ENCODE measurements at regions of chr4 and their contacts with region 1.

Region 1: GRCh38 chr4:7042697-7043464 is at the start of gene TADA2B:
- DNase-seq: peak; percentile 89 to 92 (median 91)
- H3K4me3 ChIP-seq: peak within 1 kb of the TSS; percentile 59 to 86 (median 76)
- H3K27ac ChIP-seq: peak within 1 kb of the TSS in 1 of 2 experiments; percentile 45
- H3K4me1 ChIP-seq: peaks cover 3 to 28% (median 26%) of the 10 kb centered on the region in 4 experiments
- H3K27me3 ChIP-seq: peaks cover 0 to 84% (median 46%) of the 10 kb centered on the region in 5 experiments

Region 2: DNA sequence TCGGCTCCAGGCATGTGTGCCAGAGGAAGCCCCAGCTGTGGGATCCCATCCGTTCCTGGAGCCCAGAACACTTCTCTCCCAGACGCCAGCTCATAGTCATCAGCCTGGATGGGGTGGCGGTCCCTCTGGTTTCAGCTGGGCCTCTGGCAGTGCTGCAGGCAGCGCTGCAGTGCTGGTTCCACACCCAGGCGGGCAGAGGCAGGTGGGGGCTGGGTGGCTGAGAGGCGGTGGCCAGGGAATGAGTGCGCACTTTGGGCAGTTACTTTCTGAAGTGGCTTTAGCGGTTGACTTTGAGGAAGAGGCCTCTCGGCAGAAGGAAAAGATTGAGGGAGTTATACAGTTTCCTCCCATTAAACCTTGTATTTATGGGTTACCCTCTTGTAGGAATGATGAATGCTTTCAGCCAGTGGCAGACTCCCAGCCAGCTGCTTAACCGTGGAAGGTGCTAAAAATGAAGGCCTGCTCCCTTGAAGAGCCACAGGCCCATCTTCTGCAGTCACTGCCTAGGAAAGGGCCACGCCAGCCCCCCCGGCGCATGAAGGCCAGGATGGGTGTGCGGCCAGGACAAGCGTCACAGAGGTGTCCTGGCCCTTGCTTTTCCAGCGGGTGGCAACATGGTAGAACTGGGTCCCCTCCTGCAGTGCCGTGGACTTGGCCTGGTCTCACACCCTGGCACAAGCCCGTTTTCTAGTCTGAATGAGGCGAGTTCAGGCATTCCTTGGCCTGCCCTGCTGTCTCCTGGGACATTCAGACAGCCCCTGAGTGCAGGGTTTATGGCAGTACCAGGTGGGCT is 10.2 kb after region 1 on chr4:
- CTCF ChIA-PET with region 1: interaction called, 23 read pairs
- POLR2A ChIA-PET with region 1: no interaction called
- DNase-seq: peak; percentile 80 to 93 (median 93)
- H3K4me3 ChIP-seq: peak overlapping the region in 4 of 7 experiments; percentile 1 to 16 (median 10)
- H3K27ac ChIP-seq: no peak overlapping the region
- H3K4me1 ChIP-seq: peaks cover 0 to 25% (median 17%) of the 10 kb centered on the region in 4 experiments
- H3K27me3 ChIP-seq: peaks cover 0 to 84% (median 28%) of the 10 kb centered on the region in 5 experiments

Region 3: GRCh38 chr4:7546809-7547367 is 504.0 kb after region 1 on chr4:
- CTCF ChIA-PET with region 1: no interaction called
- POLR2A ChIA-PET with region 1: no interaction called
- DNase-seq: no peak
- H3K4me3 ChIP-seq: no peak overlapping the region
- H3K27ac ChIP-seq: no peak overlapping the region
- H3K4me1 ChIP-seq: no peaks in the 10 kb centered on the region
- H3K27me3 ChIP-seq: peaks cover 0 to 27% (median 2%) of the 10 kb centered on the region in 5 experiments